A673 (cell line): ENCODE measurements at regions of chr1 and their contacts with region 1.

Region 1: DNA sequence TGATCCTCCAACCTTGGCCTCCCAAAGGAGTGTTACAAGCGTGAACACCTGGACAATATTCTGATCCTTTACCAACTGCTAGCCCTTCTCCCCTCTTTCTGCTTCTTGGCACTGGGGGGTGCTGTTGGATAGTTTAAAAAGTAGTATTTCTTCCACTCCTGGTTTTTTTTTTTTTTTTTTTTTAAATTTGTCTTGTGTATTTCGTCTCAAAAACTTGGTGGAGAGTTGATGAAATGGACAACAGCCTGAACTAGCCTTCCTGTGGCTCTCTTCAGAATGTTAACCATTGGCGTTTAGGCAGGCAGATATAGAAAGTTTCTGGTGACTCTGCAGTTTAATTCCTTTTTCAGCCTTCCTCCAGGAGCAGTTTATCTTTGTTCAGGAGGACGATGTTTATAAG is 69.7 kb upstream of the USP24 start:
- DNase-seq: peak; percentile 59
- H3K4me3 ChIP-seq: no peak overlapping the region
- H3K27ac ChIP-seq: no peak overlapping the region
- H3K4me1 ChIP-seq: peaks cover 6% of the 10 kb centered on the region
- H3K27me3 ChIP-seq: no peaks in the 10 kb centered on the region
- CTCF ChIP-seq: peak; percentile 73

Region 2: GRCh38 chr1:55215256-55216021 is 69.4 kb before region 1 on chr1 and contains the start of gene USP24:
- CTCF ChIA-PET with region 1: no interaction called
- POLR2A ChIA-PET with region 1: no interaction called
- intact Hi-C with region 1: no loop called
- DNase-seq: peak; percentile 85
- H3K4me3 ChIP-seq: peak within 1 kb of the TSS; percentile 83
- H3K27ac ChIP-seq: peak within 1 kb of the TSS; percentile 95
- H3K4me1 ChIP-seq: peaks cover 31% of the 10 kb centered on the region
- H3K27me3 ChIP-seq: no peaks in the 10 kb centered on the region
- CTCF ChIP-seq: no peak
- total RNA-seq, gene USP24: 53.0 and 54.6 TPM in 2 replicates

Region 3: DNA sequence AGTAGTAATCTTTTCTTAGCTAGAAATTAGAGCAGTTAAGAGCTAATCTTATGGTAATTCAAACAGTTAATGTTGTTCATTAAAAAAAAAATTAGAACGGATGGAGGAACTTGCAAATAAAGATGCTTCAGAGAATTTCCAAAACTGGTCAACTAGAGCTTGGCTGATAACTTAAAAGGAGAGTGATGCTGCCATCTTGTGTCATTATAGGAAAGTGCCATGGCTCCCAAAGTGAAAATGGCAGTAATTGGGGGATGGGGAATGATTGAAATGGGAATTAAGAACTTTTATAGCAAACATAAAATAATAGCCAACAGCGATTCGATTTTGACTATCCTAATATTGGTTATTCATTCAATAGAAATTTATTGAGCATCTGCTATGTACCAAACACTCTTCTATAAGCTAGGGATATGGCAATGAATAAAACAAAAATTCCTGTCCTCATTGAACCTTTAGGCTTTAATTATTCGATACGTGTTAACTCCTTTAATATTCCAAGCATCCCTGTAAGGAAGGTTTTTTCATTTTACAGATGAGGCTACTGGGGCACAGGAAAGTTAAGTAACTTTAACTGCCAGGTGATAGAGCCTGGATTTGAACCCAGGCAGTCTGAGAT is 1300.2 kb after region 1 on chr1:
- CTCF ChIA-PET with region 1: no interaction called
- POLR2A ChIA-PET with region 1: no interaction called
- intact Hi-C with region 1: loop called (anchors 5 kb)
- DNase-seq: peak; percentile 65
- H3K4me3 ChIP-seq: no peak overlapping the region
- H3K27ac ChIP-seq: no peak overlapping the region
- H3K4me1 ChIP-seq: peaks cover under 1% of the 10 kb centered on the region
- H3K27me3 ChIP-seq: no peaks in the 10 kb centered on the region
- CTCF ChIP-seq: peak; percentile 80

Region 4: GRCh38 chr1:56709269-56709880 is 1424.5 kb after region 1 on chr1:
- CTCF ChIA-PET with region 1: no interaction called
- POLR2A ChIA-PET with region 1: no interaction called
- intact Hi-C with region 1: loop called (anchors 1 kb)
- DNase-seq: peak; percentile 68
- H3K4me3 ChIP-seq: no peak overlapping the region
- H3K27ac ChIP-seq: no peak overlapping the region
- H3K4me1 ChIP-seq: no peaks in the 10 kb centered on the region
- H3K27me3 ChIP-seq: peaks cover 19% of the 10 kb centered on the region
- CTCF ChIP-seq: peak; percentile 69

Region 5: GRCh38 chr1:56821140-56821797 is 1536.4 kb after region 1 on chr1:
- CTCF ChIA-PET with region 1: no interaction called
- POLR2A ChIA-PET with region 1: no interaction called
- intact Hi-C with region 1: loop called (anchors 2 kb)
- DNase-seq: peak; percentile 88
- H3K4me3 ChIP-seq: no peak overlapping the region
- H3K27ac ChIP-seq: no peak overlapping the region
- H3K4me1 ChIP-seq: no peaks in the 10 kb centered on the region
- H3K27me3 ChIP-seq: no peaks in the 10 kb centered on the region
- CTCF ChIP-seq: peak; percentile 99